Dendritic cell treated with granulocyte-macrophage colony-stimulating factor and Interleukin-4, amounts not matched to agents 40 ng/mL and 50 ng/mL, for 4 days (primary cell): ENCODE measurements at regions of chr4 and their contacts with region 1.

Region 1: DNA sequence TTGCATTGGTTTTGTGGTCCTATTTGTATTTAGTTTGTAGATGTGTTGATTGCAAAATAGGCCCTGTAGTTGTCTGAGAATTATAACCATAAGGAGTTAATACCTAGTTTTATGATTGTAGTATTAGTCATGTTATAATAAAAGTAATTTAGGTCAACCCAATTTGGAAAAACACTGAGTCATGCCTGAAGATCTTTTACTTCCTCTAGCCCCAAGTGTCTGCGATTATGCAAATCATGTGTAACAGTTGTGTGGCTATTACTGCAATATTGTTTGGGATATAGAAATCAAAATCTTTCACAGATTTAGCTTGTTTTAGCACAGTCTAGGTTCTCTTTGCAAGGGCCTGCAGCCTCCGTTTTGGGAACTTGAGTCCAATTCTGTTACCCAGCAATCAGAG is 12.6 kb downstream of the SRD5A3 start:
- H3K4me3 Mint-ChIP-seq: no peak overlapping the region
- H3K27ac Mint-ChIP-seq: peak overlapping the region; percentile 59
- H3K4me1 Mint-ChIP-seq: peaks cover 39% of the 10 kb centered on the region
- H3K27me3 Mint-ChIP-seq: no peaks in the 10 kb centered on the region

Region 2: GRCh38 chr4:55742655-55743202 is 384.1 kb after region 1 on chr4:
- intact Hi-C with region 1: loop called (anchors 10 kb)
- H3K4me3 Mint-ChIP-seq: no peak overlapping the region
- H3K27ac Mint-ChIP-seq: no peak overlapping the region
- H3K4me1 Mint-ChIP-seq: no peaks in the 10 kb centered on the region
- H3K27me3 Mint-ChIP-seq: peaks cover 9% of the 10 kb centered on the region